IMR-90 (cell line): ENCODE measurements at regions of chr2 and their contacts with region 1.

Region 1: DNA sequence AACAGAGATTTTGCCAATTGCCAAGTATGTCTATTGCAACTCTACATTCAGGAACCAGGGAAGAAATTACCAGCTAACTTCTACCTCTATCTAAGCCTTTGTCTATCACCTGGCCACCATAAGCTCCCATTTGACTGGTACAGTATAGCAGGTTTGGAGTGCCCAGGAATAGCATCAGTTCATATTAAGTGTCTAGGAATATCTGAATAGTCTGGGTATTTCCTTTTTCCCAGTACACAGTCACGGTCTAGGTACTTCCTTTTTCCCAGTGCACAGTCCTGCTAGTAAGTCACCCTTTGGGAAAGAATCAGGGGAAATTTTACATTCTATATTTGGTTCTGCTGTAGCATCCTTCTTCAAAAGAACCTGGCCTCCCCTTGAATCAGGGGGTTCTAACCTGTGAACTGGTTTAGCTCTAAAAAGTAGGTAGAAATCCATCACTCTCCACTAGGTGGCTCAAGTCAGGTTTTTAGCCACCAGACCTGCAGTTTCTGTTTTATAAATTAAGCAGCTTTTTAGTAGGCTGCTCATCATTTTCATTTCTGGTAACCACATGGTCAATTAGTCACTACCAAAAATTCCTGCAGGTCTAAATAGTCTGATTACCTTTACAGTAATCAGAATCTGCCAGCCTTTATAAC is 49.3 kb upstream of the DNAJC10 start:
- DNase-seq: peak; percentile 46
- ATAC-seq: peak; percentile 63; the same call in 1 of the 2 replicates
- H3K4me3 ChIP-seq: no peak overlapping the region
- H3K27ac ChIP-seq: no peak overlapping the region
- H3K4me1 ChIP-seq: no peaks in the 10 kb centered on the region
- H3K27me3 ChIP-seq: no peaks in the 10 kb centered on the region
- CTCF ChIP-seq: peak; percentile 44
- POLR2A ChIP-seq: no peak
- RAD21 ChIP-seq: peak; percentile 41

Region 2: GRCh38 chr2:181774685-181775084 is 892.1 kb before region 1 on chr2:
- CTCF ChIA-PET with region 1: no interaction called
- POLR2A ChIA-PET with region 1: no interaction called
- dilution Hi-C with region 1: no loop called
- in situ Hi-C with region 1: loop called (anchors 25 kb)
- intact Hi-C with region 1: no loop called
- DNase-seq: peak; percentile 59
- ATAC-seq: peak; percentile 61
- H3K4me3 ChIP-seq: no peak overlapping the region
- H3K27ac ChIP-seq: no peak overlapping the region
- H3K4me1 ChIP-seq: peaks cover 9% of the 10 kb centered on the region; the same call in 1 of the 2 replicates
- H3K27me3 ChIP-seq: no peaks in the 10 kb centered on the region
- CTCF ChIP-seq: no peak
- POLR2A ChIP-seq: no peak
- RAD21 ChIP-seq: no peak

Region 3: GRCh38 chr2:181904022-181904632 is 762.7 kb before region 1 on chr2:
- CTCF ChIA-PET with region 1: no interaction called
- POLR2A ChIA-PET with region 1: no interaction called
- dilution Hi-C with region 1: no loop called
- in situ Hi-C with region 1: loop called (anchors 25 kb)
- intact Hi-C with region 1: no loop called
- DNase-seq: peak; percentile 50
- ATAC-seq: no peak
- H3K4me3 ChIP-seq: no peak overlapping the region
- H3K27ac ChIP-seq: no peak overlapping the region
- H3K4me1 ChIP-seq: peaks cover 3% of the 10 kb centered on the region; the same call in 1 of the 2 replicates
- H3K27me3 ChIP-seq: no peaks in the 10 kb centered on the region
- CTCF ChIP-seq: peak; percentile 64
- POLR2A ChIP-seq: no peak
- RAD21 ChIP-seq: peak; percentile 69

Region 4: DNA sequence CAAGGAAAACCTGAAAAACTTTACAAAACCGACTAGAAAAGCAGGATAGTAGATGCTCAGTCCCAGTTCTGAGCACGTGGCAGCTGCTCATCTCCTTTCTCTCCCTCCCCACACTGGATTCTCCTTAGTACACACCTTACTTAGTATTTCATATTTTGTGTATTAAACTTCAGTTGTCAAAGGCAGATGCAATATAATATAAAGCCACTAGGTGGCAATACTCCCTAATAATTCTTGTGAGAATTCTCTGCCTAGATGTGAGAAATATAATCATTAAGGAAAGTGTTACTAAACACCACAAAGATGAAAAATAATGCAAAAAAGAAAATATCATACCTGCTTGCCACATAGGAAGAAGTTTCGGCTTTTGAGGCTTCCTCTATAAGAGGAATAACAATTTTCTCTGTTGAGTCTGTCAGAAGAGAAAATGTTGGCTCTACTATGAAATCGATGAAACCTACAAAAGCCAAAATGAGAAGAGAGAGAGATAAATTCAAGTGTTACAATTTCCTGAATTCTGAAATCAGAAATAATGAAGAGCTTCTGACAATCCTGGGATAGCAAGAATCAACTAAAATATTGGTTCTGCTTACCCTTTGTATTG is 480.6 kb before region 1 on chr2:
- CTCF ChIA-PET with region 1: no interaction called
- POLR2A ChIA-PET with region 1: no interaction called
- dilution Hi-C with region 1: loop called (anchors 25 kb)
- in situ Hi-C with region 1: no loop called
- intact Hi-C with region 1: no loop called
- DNase-seq: peak; percentile 34
- ATAC-seq: peak; percentile 73
- H3K4me3 ChIP-seq: no peak overlapping the region
- H3K27ac ChIP-seq: no peak overlapping the region
- H3K4me1 ChIP-seq: no peaks in the 10 kb centered on the region
- H3K27me3 ChIP-seq: no peaks in the 10 kb centered on the region; the same call in 1 of the 2 replicates
- CTCF ChIP-seq: peak; percentile 86
- POLR2A ChIP-seq: 0 out of 2 replicates have a peak, but pooled peaks have one; percentile 36
- RAD21 ChIP-seq: peak; percentile 86

Region 5: GRCh38 chr2:182715896-182716668 is 49.3 kb after region 1 on chr2 and contains the start of gene DNAJC10:
- CTCF ChIA-PET with region 1: no interaction called
- POLR2A ChIA-PET with region 1: no interaction called
- dilution Hi-C with region 1: no loop called
- in situ Hi-C with region 1: no loop called
- intact Hi-C with region 1: loop called (anchors 5 kb)
- DNase-seq: peak; percentile 93
- ATAC-seq: peak; percentile 95
- H3K4me3 ChIP-seq: peak within 1 kb of the TSS; percentile 95
- H3K27ac ChIP-seq: peak within 1 kb of the TSS; percentile 34
- H3K4me1 ChIP-seq: peaks cover 3% of the 10 kb centered on the region; the same call in 1 of the 2 replicates
- H3K27me3 ChIP-seq: no peaks in the 10 kb centered on the region
- CTCF ChIP-seq: no peak
- POLR2A ChIP-seq: peak; percentile 88
- RAD21 ChIP-seq: no peak
- total RNA-seq, gene DNAJC10: 53.2 and 120 TPM in 2 replicates